ENCODE measurements at regions of chr1 and their contacts with region 1.

Region 1: GRCh38 chr1:169485544-169486278 is at the start of gene SLC19A2:
- DNase-seq: peak; percentile 100
- H3K4me3 Mint-ChIP-seq: peak within 1 kb of the TSS; percentile 75
- H3K27ac Mint-ChIP-seq: peak within 1 kb of the TSS; percentile 98
- H3K4me1 Mint-ChIP-seq: peaks cover 46% of the 10 kb centered on the region
- H3K27me3 Mint-ChIP-seq: no peaks in the 10 kb centered on the region
- CTCF ChIP-seq: no peak
- total RNA-seq, gene SLC19A2: 13.9 and 16.7 TPM in 2 replicates

Region 2: GRCh38 chr1:169367486-169368405 is 118.0 kb before region 1 on chr1 and contains the starts of genes BLZF1 and NME7:
- CTCF ChIA-PET with region 1: no interaction called
- POLR2A ChIA-PET with region 1: interaction called, 51 read pairs
- intact Hi-C with region 1: loop called (anchors 2 kb)
- DNase-seq: peak; percentile 99
- H3K4me3 Mint-ChIP-seq: no peak within 1 kb of the TSS
- H3K27ac Mint-ChIP-seq: no peak within 1 kb of the TSS
- H3K4me1 Mint-ChIP-seq: peaks cover 24% of the 10 kb centered on the region
- H3K27me3 Mint-ChIP-seq: no peaks in the 10 kb centered on the region
- CTCF ChIP-seq: no peak
- total RNA-seq, gene BLZF1: 57.8 and 66.1 TPM in 2 replicates
- total RNA-seq, gene NME7: 36.5 and 46.8 TPM in 2 replicates

Region 3: GRCh38 chr1:169473352-169473751 is 12.4 kb before region 1 on chr1:
- CTCF ChIA-PET with region 1: interaction called, 7 read pairs
- POLR2A ChIA-PET with region 1: interaction called, 29 read pairs
- intact Hi-C with region 1: no loop called
- DNase-seq: peak; percentile 27
- H3K4me3 Mint-ChIP-seq: no peak overlapping the region
- H3K27ac Mint-ChIP-seq: no peak overlapping the region
- H3K4me1 Mint-ChIP-seq: peaks cover 11% of the 10 kb centered on the region
- H3K27me3 Mint-ChIP-seq: no peaks in the 10 kb centered on the region
- CTCF ChIP-seq: no peak

Region 4: DNA sequence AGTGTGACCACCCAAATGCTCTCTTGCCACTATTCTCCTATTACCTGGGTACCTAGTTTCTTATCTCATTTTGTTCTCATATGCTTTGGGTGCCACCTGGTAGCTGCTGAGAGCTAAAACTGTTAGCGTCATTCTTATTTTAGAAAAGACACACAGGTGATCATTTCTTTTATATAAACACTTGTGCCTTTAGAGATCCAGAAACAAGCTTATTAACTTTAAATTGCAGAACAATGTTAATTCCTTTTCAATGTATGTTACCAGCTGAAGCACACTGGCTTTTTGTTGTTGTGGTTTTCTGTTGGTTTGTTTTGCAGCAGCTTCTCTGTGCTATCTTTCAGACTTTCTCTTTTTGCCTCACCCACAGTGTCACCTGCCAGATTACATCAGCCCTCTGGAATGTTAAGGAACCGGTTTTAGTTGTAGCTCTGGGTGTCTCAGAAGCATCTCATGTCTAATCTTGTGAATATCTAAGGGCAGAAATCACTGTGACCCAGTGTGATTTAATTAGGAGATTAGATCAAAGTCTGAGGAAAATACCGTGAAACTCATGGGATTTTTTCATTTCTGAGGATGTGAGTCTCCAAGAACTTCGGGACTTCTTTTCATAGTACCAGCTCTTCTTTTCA is 43.5 kb after region 1 on chr1:
- CTCF ChIA-PET with region 1: interaction called, 6 read pairs
- POLR2A ChIA-PET with region 1: interaction called, 84 read pairs
- intact Hi-C with region 1: no loop called
- DNase-seq: peak; percentile 61
- H3K4me3 Mint-ChIP-seq: peak overlapping the region; percentile 10
- H3K27ac Mint-ChIP-seq: peak overlapping the region; percentile 77
- H3K4me1 Mint-ChIP-seq: peaks cover 33% of the 10 kb centered on the region
- H3K27me3 Mint-ChIP-seq: no peaks in the 10 kb centered on the region
- CTCF ChIP-seq: no peak

Region 5: DNA sequence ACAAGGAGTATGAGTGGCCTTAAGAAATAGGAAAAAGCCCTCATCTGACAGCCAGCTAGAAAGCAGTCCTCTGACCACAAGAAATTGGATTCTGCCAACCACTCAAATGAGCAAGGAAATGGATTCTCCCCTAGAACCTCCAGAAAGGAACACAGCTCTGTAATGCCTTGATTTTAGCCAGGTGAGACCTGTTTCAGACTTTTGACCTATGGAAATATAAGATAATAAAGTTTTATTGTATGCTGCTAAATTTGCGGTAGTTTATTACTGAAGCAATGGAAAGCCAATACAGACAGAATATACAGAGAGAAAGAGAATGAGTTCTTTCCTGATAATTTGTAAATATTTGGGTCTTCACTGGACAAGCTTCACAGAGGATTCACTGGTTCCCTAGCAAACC is 277.0 kb after region 1 on chr1:
- CTCF ChIA-PET with region 1: no interaction called
- POLR2A ChIA-PET with region 1: no interaction called
- intact Hi-C with region 1: no loop called
- DNase-seq: no peak
- H3K4me3 Mint-ChIP-seq: no peak overlapping the region
- H3K27ac Mint-ChIP-seq: no peak overlapping the region
- H3K4me1 Mint-ChIP-seq: no peaks in the 10 kb centered on the region
- H3K27me3 Mint-ChIP-seq: no peaks in the 10 kb centered on the region
- CTCF ChIP-seq: no peak

Region 6: DNA sequence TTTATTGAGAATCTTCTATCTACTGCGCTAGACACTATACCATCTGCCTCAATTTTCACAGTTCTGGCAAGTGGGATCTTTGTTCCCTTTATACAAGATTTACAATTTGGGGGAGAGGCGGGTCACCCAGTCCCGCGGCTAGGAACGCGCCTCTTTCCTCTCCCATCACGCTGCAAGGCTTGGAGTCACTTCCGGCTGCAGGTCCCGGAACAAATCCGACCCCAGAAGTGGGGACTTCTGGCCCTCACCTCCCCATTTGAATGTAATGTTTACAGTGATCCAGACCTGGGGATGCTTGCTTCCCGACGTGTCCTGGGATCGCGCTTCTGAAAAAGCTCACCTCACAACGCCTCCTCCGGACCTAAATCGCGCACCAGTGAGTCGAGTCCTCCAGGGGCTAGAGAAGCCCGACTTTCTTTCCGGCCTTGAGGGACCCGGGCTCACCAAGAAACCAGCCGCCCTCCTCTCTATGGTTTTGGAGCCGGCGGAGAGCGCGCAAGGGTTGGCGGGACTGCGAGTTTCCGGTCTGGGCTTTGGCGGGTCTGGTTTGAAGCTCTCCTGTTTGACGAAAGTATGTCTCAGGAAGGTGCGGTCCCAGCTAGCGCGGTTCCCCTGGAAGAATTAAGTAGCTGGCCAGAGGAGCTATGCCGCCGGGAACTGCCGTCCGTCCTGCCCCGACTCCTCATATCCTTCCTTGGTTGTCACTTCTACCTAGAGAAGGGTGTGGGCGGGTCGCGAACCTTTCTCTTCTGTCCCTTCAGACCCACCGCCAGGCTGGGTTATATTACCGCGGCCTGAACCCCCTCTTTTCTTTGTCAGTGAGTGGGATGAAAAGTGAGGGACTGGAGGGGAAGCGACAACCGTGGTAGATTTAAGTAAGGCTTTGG is 309.1 kb after region 1 on chr1 and contains the start of gene METTL18:
- CTCF ChIA-PET with region 1: no interaction called
- POLR2A ChIA-PET with region 1: interaction called, 13 read pairs
- intact Hi-C with region 1: no loop called
- DNase-seq: peak; percentile 98
- H3K4me3 Mint-ChIP-seq: peak within 1 kb of the TSS; percentile 100
- H3K27ac Mint-ChIP-seq: peak within 1 kb of the TSS; percentile 99
- H3K4me1 Mint-ChIP-seq: peaks cover 10% of the 10 kb centered on the region
- H3K27me3 Mint-ChIP-seq: no peaks in the 10 kb centered on the region
- CTCF ChIP-seq: peak; percentile 53
- total RNA-seq, gene METTL18: 2.8 and 4.1 TPM in 2 replicates

Measured in MCF 10A (cell line).